Caco-2 (cell line): ENCODE measurements at regions of chr19 and their contacts with region 1.

Region 1: GRCh38 chr19:4803736-4804695 is 12.5 kb downstream of the FEM1A start:
- DNase-seq: peak; percentile 69 to 84
- H3K4me3 ChIP-seq: no peak overlapping the region
- H3K4me3 Mint-ChIP-seq: no peak overlapping the region
- H3K27ac Mint-ChIP-seq: no peak overlapping the region
- H3K4me1 ChIP-seq: peaks cover 6% of the 10 kb centered on the region; the same call in 1 of the 2 replicates
- H3K4me1 Mint-ChIP-seq: no peaks in the 10 kb centered on the region
- H3K27me3 ChIP-seq: no peaks in the 10 kb centered on the region
- H3K27me3 Mint-ChIP-seq: no peaks in the 10 kb centered on the region
- CTCF ChIP-seq: peak; percentile 91 to 92

Region 2: DNA sequence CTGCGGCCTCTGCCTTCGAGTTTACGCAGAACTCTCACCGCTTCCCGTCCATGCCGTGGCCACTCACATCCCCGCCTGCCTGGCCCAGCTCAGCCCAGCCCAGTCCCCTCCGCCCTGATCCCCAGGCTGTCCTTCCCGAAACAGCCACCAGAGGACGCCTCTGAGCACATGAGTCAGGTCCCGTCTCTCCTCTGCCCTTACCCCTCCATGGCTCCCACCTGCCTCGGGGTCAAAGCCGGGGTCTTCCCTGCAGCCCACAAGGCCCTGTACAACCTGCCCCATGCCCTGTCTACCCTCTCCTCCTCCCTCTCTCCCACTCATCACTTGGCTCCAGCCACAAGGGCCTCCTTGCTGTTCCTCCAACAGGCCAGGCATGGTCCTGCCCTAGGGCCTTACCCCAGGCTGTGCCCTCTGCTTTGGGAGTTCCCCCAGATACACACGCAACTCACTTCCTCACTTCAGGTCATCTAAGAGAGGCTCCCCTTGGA is 236.4 kb before region 1 on chr19:
- CTCF ChIA-PET with region 1: no interaction called
- POLR2A ChIA-PET with region 1: no interaction called
- intact Hi-C with region 1: loop called (anchors 5 kb)
- DNase-seq: peak; percentile 72 to 75
- H3K4me3 ChIP-seq: no peak overlapping the region
- H3K4me3 Mint-ChIP-seq: no peak overlapping the region
- H3K27ac Mint-ChIP-seq: no peak overlapping the region
- H3K4me1 ChIP-seq: no peaks in the 10 kb centered on the region
- H3K4me1 Mint-ChIP-seq: no peaks in the 10 kb centered on the region
- H3K27me3 ChIP-seq: no peaks in the 10 kb centered on the region
- H3K27me3 Mint-ChIP-seq: no peaks in the 10 kb centered on the region
- CTCF ChIP-seq: peak; percentile 80 to 88

Region 3: DNA sequence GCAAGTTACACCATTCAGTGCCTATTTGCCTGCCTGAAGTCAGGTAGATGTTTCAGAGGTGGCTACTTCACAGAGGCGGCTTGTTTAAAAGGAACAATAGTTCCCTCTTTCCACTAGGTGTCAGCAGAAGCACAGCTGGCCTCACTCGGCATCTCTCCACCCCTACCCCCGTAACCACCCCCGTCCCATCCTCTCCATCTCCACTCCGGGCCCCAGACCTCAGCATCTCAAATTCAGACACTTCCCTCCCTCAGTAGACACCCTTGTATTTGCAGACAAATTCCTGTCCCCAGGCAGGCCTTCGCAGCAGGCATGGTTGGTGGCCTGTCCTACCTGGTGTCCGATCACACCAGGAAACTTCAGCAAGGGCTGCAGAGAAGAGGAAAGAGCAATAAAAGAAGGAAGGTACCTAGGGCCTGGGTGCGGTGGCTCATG is 71.3 kb before region 1 on chr19:
- CTCF ChIA-PET with region 1: interaction called, 5 read pairs
- POLR2A ChIA-PET with region 1: no interaction called
- intact Hi-C with region 1: loop called (anchors 1 kb)
- DNase-seq: peak; percentile 69 to 75
- H3K4me3 ChIP-seq: no peak overlapping the region
- H3K4me3 Mint-ChIP-seq: no peak overlapping the region
- H3K27ac Mint-ChIP-seq: no peak overlapping the region
- H3K4me1 ChIP-seq: no peaks in the 10 kb centered on the region
- H3K4me1 Mint-ChIP-seq: peaks cover 5% of the 10 kb centered on the region
- H3K27me3 ChIP-seq: no peaks in the 10 kb centered on the region
- H3K27me3 Mint-ChIP-seq: peaks cover 6% of the 10 kb centered on the region
- CTCF ChIP-seq: peak; percentile 75 to 76